OCI-LY7 (cell line): ENCODE measurements at regions of chr3 and their contacts with region 1.

Region 1: DNA sequence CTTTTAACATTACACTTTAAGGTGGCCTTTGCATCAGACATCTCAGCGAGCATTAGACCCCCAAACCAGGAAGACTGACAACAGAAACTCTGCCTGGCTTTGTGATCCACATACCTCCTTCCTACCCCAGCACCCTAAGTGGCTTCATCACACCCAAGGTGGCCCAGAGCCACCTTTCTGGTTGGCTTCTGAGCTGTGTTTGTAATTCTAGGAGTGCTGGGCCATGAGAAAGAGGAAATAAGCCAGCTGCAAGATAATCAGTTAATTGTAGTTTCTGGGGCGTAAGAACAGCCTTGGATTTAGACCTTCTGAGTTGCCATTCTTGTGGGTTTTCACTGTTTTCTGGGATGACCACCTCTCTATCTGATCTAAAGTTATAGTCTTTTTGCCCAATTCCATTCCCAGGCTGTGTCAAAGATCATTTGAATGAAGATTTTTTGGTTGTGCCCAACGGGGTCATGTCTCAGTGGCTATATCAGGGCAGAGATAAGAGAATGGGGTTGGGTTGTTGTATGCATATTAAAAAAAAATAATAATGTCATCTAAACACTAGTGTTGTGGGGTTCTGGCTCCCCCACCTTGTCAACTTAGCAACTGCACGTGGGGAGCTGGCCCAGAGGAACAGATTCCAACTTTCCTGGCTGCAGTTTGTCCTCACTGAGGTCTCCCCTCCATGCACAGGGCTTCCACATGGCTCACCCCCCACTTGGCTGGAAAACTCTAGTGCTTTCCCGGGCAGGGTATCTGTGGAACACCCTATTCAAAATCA is 234.8 kb upstream of the WNT5A start:
- DNase-seq: peak; percentile 83
- H3K4me3 ChIP-seq: peak overlapping the region; percentile 2
- H3K27ac ChIP-seq: peak overlapping the region; percentile 94
- H3K4me1 ChIP-seq: peaks cover 95% of the 10 kb centered on the region
- CTCF ChIP-seq: peak; percentile 78

Region 2: GRCh38 chr3:54853573-54854404 is 868.1 kb before region 1 on chr3:
- CTCF ChIA-PET with region 1: no interaction called
- POLR2A ChIA-PET with region 1: no interaction called
- intact Hi-C with region 1: loop called (anchors 5 kb)
- DNase-seq: peak; percentile 60
- H3K4me3 ChIP-seq: no peak overlapping the region
- H3K27ac ChIP-seq: no peak overlapping the region
- H3K4me1 ChIP-seq: no peaks in the 10 kb centered on the region
- CTCF ChIP-seq: peak; percentile 90

Region 3: GRCh38 chr3:55376753-55377347 is 345.1 kb before region 1 on chr3:
- CTCF ChIA-PET with region 1: no interaction called
- POLR2A ChIA-PET with region 1: no interaction called
- intact Hi-C with region 1: loop called (anchors 5 kb)
- DNase-seq: peak; percentile 85
- H3K4me3 ChIP-seq: peak overlapping the region; percentile 29
- H3K27ac ChIP-seq: peak overlapping the region; percentile 48
- H3K4me1 ChIP-seq: peaks cover 37% of the 10 kb centered on the region
- CTCF ChIP-seq: 0 out of 2 replicates have a peak, but pooled peaks have one; percentile 14

Region 4: DNA sequence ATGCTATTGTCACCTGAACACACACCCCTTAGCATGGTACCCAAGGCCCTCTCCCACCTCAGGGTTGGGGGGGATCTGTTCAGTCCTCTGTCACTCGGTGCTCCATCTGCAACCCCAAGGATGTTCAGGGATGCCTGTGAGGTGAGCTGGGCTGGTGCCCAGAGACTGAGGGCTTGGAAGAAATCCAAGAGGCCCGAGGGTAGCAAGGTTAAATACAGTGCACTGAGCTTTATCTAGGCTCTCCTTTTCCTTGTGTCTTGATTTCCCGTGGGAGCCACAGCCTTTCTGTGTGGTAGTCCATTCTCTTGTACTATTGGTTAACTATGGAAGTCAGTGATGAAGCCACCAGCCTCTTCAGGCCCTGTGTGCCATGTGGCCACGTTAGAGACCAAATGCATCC is 216.1 kb before region 1 on chr3:
- CTCF ChIA-PET with region 1: no interaction called
- POLR2A ChIA-PET with region 1: no interaction called
- intact Hi-C with region 1: loop called (anchors 5 kb)
- DNase-seq: no peak
- H3K4me3 ChIP-seq: no peak overlapping the region
- H3K27ac ChIP-seq: no peak overlapping the region
- H3K4me1 ChIP-seq: peaks cover 8% of the 10 kb centered on the region
- CTCF ChIP-seq: no peak

Region 5: DNA sequence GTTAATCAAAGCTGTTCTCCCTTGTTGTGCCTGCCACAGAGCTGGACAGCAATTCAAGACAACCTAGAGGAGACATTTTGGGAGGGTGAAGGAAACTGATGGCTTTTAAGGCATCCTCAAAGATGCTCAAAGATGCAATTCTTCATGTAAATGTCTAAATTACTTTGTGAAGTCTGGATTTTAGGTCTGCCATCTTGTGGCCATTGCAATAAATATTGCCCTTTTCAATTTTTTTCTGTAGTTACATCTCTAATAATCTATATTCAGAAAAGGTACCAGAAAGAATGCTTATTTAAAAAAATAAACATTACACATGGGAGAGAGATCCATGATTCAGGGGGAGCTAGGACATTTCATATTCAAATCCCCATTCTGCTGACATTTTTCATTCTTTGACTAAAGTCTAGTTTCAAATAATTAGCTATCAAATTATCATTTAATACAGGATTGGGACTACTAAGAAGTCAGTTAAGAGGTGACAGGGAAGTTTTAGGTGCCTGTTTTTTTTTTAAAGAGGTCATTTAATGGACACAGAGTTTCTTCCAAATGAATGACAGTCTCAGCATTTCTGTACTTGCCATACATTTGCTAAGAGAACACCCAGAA is 25.0 kb after region 1 on chr3:
- CTCF ChIA-PET with region 1: interaction called, 5 read pairs
- POLR2A ChIA-PET with region 1: interaction called, 18 read pairs
- intact Hi-C with region 1: loop called (anchors 1 kb)
- DNase-seq: peak; percentile 67
- H3K4me3 ChIP-seq: no peak overlapping the region
- H3K27ac ChIP-seq: peak overlapping the region; percentile 12
- H3K4me1 ChIP-seq: peaks cover 19% of the 10 kb centered on the region
- CTCF ChIP-seq: peak; percentile 87

Region 6: GRCh38 chr3:55923207-55923606 is 201.3 kb after region 1 on chr3:
- CTCF ChIA-PET with region 1: no interaction called
- POLR2A ChIA-PET with region 1: no interaction called
- intact Hi-C with region 1: no loop called
- DNase-seq: no peak
- H3K4me3 ChIP-seq: no peak overlapping the region
- H3K27ac ChIP-seq: no peak overlapping the region
- H3K4me1 ChIP-seq: no peaks in the 10 kb centered on the region
- CTCF ChIP-seq: no peak